ENCODE measurements at regions of chr1 and their contacts with region 1.

Region 1: GRCh38 chr1:67274623-67275325 is 32.9 kb upstream of the IL12RB2 start:
- DNase-seq: peak; percentile 44
- ATAC-seq: peak; percentile 90
- H3K4me3 Mint-ChIP-seq: no peak overlapping the region
- H3K27ac Mint-ChIP-seq: peak overlapping the region; percentile 76
- H3K4me1 Mint-ChIP-seq: peaks cover 54% of the 10 kb centered on the region
- H3K27me3 Mint-ChIP-seq: peaks cover 3% of the 10 kb centered on the region

Region 2: DNA sequence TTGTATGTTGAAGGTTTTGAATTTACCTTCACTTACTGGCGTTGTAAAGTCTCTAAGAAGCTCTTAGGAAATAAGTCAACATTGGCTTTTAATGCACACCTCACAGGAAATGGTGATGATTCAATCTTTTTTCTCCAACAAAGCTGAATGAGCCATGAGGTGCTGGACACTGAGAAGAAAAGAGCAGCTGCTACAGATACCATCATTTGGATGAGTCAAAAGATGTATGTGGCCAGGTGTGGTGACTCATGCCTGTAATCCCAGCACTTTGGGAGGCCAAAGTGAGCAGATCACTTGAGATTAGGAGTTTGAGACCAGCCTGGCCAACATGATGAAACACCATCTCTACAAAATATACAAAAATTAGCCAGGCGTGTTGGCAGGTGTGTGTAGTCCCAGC is 111.8 kb before region 1 on chr1:
- CTCF ChIA-PET with region 1: interaction called, 3 read pairs
- POLR2A ChIA-PET with region 1: interaction called, 3 read pairs
- intact Hi-C with region 1: loop called in 1 of 2 experiments (anchors 1 kb)
- DNase-seq: peak; percentile 71
- ATAC-seq: peak; percentile 73
- H3K4me3 Mint-ChIP-seq: peak overlapping the region; percentile 59
- H3K27ac Mint-ChIP-seq: peak overlapping the region; percentile 90
- H3K4me1 Mint-ChIP-seq: peaks cover 66% of the 10 kb centered on the region
- H3K27me3 Mint-ChIP-seq: peaks cover 1% of the 10 kb centered on the region

Region 3: DNA sequence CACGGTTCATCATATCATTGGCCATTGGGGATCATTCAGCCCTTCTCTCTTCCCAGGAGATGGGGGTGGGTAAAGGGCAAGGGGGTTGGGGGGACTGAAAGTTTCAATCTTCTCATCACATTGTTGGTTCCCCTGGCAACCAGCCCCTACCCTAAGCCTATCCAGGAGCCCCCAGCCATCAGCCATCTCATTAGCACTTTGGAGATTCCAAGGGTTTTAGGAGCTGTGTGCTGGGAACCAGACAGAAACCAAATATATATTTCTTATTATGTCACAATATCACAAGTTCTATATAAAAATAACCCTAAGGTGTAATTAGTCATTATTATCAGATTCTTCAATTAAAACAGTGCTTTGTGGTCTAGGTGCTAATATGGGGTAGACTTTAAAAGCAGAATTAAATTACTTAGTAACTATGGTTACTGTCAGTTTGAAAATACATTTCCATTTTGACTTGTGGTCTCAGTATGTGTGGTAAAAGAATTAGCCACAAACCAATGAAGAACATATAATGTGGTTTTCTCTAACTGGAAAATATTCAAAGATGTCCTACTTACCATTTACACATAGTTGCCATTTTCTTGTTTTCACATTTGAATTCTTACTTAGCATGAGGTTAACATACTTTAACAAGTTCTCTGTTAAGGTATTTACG is 80.4 kb before region 1 on chr1:
- CTCF ChIA-PET with region 1: interaction called, 5 read pairs
- POLR2A ChIA-PET with region 1: interaction called, 3 read pairs
- intact Hi-C with region 1: loop called (anchors 1 kb)
- DNase-seq: no peak
- ATAC-seq: peak; percentile 24
- H3K4me3 Mint-ChIP-seq: no peak overlapping the region
- H3K27ac Mint-ChIP-seq: peak overlapping the region; percentile 60
- H3K4me1 Mint-ChIP-seq: peaks cover 21% of the 10 kb centered on the region
- H3K27me3 Mint-ChIP-seq: no peaks in the 10 kb centered on the region

Region 4: GRCh38 chr1:67285780-67286488 is 11.2 kb after region 1 on chr1:
- CTCF ChIA-PET with region 1: interaction called, 12 read pairs
- POLR2A ChIA-PET with region 1: interaction called, 10 read pairs
- intact Hi-C with region 1: loop called (anchors 1 kb)
- DNase-seq: peak; percentile 31
- ATAC-seq: peak; percentile 96
- H3K4me3 Mint-ChIP-seq: no peak overlapping the region
- H3K27ac Mint-ChIP-seq: peak overlapping the region; percentile 85
- H3K4me1 Mint-ChIP-seq: peaks cover 44% of the 10 kb centered on the region
- H3K27me3 Mint-ChIP-seq: peaks cover 2% of the 10 kb centered on the region

Region 5: GRCh38 chr1:67314696-67315095 is 39.9 kb after region 1 on chr1:
- CTCF ChIA-PET with region 1: interaction called, 3 read pairs
- POLR2A ChIA-PET with region 1: interaction called, 5 read pairs
- intact Hi-C with region 1: loop called in 1 of 2 experiments (anchors 1 kb)
- DNase-seq: peak; percentile 38
- ATAC-seq: peak; percentile 76
- H3K4me3 Mint-ChIP-seq: peak overlapping the region; percentile 38
- H3K27ac Mint-ChIP-seq: peak overlapping the region; percentile 89
- H3K4me1 Mint-ChIP-seq: peaks cover 43% of the 10 kb centered on the region
- H3K27me3 Mint-ChIP-seq: no peaks in the 10 kb centered on the region

Region 6: DNA sequence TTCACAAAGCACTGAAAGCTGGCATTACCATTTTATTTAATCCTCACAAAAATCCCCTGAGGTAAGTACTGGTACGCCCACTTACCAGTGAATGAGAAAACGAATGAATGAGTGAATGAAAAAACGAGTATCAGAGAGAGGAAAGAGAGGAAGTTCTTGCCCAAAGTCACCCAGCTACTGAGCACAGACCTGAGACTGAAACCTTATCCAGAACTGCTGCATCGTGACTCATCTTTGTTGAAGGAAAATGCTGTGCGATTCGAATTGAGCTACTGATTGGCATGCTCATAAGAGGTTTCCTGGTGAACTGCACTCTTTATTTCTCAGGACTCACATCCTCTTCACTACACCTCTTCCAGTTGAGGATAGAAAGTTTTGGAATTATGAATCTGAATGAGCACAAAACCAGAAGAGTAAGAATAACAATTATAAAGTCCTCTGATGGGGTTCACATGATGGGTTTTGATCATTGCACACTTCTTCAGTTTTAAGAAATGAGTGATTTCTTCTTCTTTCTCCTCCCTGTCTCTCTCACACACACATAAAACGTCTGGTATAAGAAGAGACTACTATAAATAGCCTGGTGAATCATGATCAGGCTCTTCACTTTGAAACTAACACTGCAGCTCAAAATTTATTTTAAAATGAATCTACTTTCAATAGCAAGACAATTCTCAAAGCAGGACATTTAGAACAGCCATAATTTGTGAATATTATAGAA is 65.0 kb after region 1 on chr1:
- CTCF ChIA-PET with region 1: interaction called, 16 read pairs
- POLR2A ChIA-PET with region 1: interaction called, 29 read pairs
- intact Hi-C with region 1: loop called (anchors 1 kb)
- DNase-seq: peak; percentile 67
- ATAC-seq: peak; percentile 67
- H3K4me3 Mint-ChIP-seq: peak overlapping the region; percentile 40
- H3K27ac Mint-ChIP-seq: peak overlapping the region; percentile 94
- H3K4me1 Mint-ChIP-seq: peaks cover 87% of the 10 kb centered on the region
- H3K27me3 Mint-ChIP-seq: no peaks in the 10 kb centered on the region

Measured in activated CD4-positive, alpha-beta T cell treated with anti-CD3 and anti-CD28 coated beads for 36 hours (primary cell).